Activated CD4-positive, alpha-beta T cell treated with anti-CD3 and anti-CD28 coated beads, Interleukin-2, amount 10 ng/mL, durations not matched to agents 7 days and 5 days (primary cell): ENCODE measurements at regions of chr20 and their contacts with region 1.

Region 1: GRCh38 chr20:31723319-31724078 is 831 bp upstream of the BCL2L1 start:
- DNase-seq: peak; percentile 97
- H3K4me3 Mint-ChIP-seq: peak overlapping the region; percentile 85
- H3K27ac Mint-ChIP-seq: peak overlapping the region; percentile 98
- H3K4me1 Mint-ChIP-seq: peaks cover 28% of the 10 kb centered on the region
- H3K27me3 Mint-ChIP-seq: no peaks in the 10 kb centered on the region

Region 2: GRCh38 chr20:31566658-31567379 is 156.7 kb before region 1 on chr20:
- CTCF ChIA-PET with region 1: interaction called, 10 read pairs
- POLR2A ChIA-PET with region 1: no interaction called
- DNase-seq: no peak
- H3K4me3 Mint-ChIP-seq: no peak overlapping the region
- H3K27ac Mint-ChIP-seq: peak overlapping the region; percentile 64
- H3K4me1 Mint-ChIP-seq: peaks cover 20% of the 10 kb centered on the region
- H3K27me3 Mint-ChIP-seq: no peaks in the 10 kb centered on the region

Region 3: GRCh38 chr20:31630187-31630790 is 93.2 kb before region 1 on chr20:
- CTCF ChIA-PET with region 1: interaction called, 58 read pairs
- POLR2A ChIA-PET with region 1: interaction called, 3 read pairs
- DNase-seq: no peak
- H3K4me3 Mint-ChIP-seq: no peak overlapping the region
- H3K27ac Mint-ChIP-seq: no peak overlapping the region
- H3K4me1 Mint-ChIP-seq: no peaks in the 10 kb centered on the region
- H3K27me3 Mint-ChIP-seq: peaks cover 2% of the 10 kb centered on the region

Region 4: GRCh38 chr20:31652917-31653396 is 70.5 kb before region 1 on chr20:
- CTCF ChIA-PET with region 1: interaction called, 219 read pairs
- POLR2A ChIA-PET with region 1: no interaction called
- DNase-seq: no peak
- H3K4me3 Mint-ChIP-seq: no peak overlapping the region
- H3K27ac Mint-ChIP-seq: no peak overlapping the region
- H3K4me1 Mint-ChIP-seq: no peaks in the 10 kb centered on the region
- H3K27me3 Mint-ChIP-seq: peaks cover 11% of the 10 kb centered on the region

Region 5: DNA sequence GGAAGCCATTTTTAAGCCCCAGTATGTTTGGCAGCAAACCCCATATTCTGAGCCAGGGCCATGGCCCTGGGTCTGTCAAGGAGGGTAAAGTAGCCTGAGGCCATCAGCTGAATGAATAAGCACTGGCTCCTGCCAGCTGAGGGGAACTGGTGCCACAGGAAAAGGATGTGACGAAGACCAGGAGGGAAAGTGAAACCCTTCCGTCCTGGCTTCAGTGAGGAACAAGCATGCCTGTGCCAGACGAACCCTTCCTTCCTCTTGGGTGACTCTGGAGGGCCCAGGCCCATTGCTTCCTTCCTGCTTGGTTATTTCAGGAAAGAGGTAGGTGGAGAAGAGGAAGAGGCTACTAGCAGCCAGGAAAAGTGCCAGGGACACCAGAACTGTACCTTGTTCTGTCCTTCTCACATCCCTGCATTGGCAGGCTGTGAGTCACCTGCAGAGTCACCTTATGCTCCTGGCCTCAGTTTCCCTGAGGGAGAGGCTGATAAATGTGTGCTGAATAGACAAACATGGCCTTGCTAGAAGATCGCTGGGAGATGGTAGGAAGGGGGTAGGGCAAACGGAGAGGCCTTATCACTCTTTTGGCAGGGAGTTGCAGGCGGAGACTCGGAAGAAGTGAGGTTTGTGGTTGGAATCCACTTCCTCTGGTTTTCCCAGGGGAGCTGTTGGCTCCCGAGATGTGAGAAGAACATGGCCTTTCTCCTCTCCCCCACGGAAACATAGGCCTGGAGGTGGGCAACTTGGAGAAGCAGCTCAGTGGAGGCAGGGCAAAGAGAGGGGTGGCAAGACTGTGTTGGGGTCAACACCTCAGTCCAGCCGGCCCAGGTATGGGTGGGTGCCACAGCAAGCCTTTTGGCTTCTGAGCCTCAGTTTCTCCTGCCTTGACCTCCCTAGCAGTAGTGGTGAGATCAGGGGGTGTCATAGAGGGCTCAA is 48.3 kb before region 1 on chr20:
- CTCF ChIA-PET with region 1: interaction called, 64 read pairs
- POLR2A ChIA-PET with region 1: interaction called, 5 read pairs
- DNase-seq: peak; percentile 81
- H3K4me3 Mint-ChIP-seq: peak overlapping the region; percentile 80
- H3K27ac Mint-ChIP-seq: peak overlapping the region; percentile 99
- H3K4me1 Mint-ChIP-seq: peaks cover 82% of the 10 kb centered on the region
- H3K27me3 Mint-ChIP-seq: no peaks in the 10 kb centered on the region

Region 6: GRCh38 chr20:31698803-31699718 is 24.4 kb before region 1 on chr20:
- CTCF ChIA-PET with region 1: interaction called, 58 read pairs
- POLR2A ChIA-PET with region 1: no interaction called
- DNase-seq: peak; percentile 33
- H3K4me3 Mint-ChIP-seq: peak overlapping the region; percentile 21
- H3K27ac Mint-ChIP-seq: peak overlapping the region; percentile 83
- H3K4me1 Mint-ChIP-seq: peaks cover 63% of the 10 kb centered on the region
- H3K27me3 Mint-ChIP-seq: no peaks in the 10 kb centered on the region

Region 7: GRCh38 chr20:31738729-31739561 is 15.4 kb after region 1 on chr20 and contains the start of gene TPX2:
- CTCF ChIA-PET with region 1: interaction called, 69 read pairs
- POLR2A ChIA-PET with region 1: no interaction called
- DNase-seq: peak; percentile 89
- H3K4me3 Mint-ChIP-seq: no peak within 1 kb of the TSS
- H3K27ac Mint-ChIP-seq: no peak within 1 kb of the TSS
- H3K4me1 Mint-ChIP-seq: peaks cover 10% of the 10 kb centered on the region
- H3K27me3 Mint-ChIP-seq: peaks cover 7% of the 10 kb centered on the region
- total RNA-seq, gene TPX2: 164 to 193 TPM